Mammary epithelial cell (primary cell): ENCODE measurements at regions of chr7 and their contacts with region 1.

Region 1: GRCh38 chr7:98981701-98982100 is 103.4 kb downstream of the TRRAP start:
- DNase-seq: no peak
- H3K4me3 ChIP-seq: no peak overlapping the region
- H3K27ac ChIP-seq: no peak overlapping the region
- H3K4me1 ChIP-seq: no peaks in the 10 kb centered on the region
- H3K27me3 ChIP-seq: no peaks in the 10 kb centered on the region
- CTCF ChIP-seq: no peak

Region 2: GRCh38 chr7:99021941-99022560 is 40.4 kb after region 1 on chr7:
- CTCF ChIA-PET with region 1: no interaction called
- dilution Hi-C with region 1: loop called (anchors 5 kb)
- in situ Hi-C with region 1: no loop called
- intact Hi-C with region 1: no loop called
- DNase-seq: no peak
- H3K4me3 ChIP-seq: no peak overlapping the region
- H3K27ac ChIP-seq: no peak overlapping the region
- H3K4me1 ChIP-seq: no peaks in the 10 kb centered on the region
- H3K27me3 ChIP-seq: no peaks in the 10 kb centered on the region
- CTCF ChIP-seq: no peak